ENCODE measurements at regions of chr9 and their contacts with region 1.

Region 1: GRCh38 chr9:14353222-14354056 is 39.5 kb upstream of the NFIB start:
- DNase-seq: peak; percentile 95

Region 2: DNA sequence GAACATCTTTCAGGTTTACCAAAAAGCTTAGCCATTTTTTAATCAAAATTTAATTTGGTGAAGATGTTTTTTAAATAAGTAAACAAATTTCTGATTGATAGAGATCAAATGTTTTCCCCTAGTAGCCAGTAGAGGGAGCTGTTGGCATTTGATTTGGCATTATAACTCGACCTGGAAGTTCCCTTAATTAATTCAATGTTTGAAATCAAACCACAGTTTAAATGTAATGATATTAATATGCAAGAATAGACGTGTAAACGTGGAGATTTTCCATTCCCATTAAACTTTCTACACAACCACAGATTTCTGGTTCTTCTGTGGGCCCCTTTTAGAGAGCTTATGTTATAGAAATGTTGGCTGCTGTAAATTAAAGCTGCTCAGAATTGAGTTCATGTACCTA is 925.9 kb before region 1 on chr9:
- intact Hi-C with region 1: loop called (anchors 5 kb)
- DNase-seq: no peak

Region 3: DNA sequence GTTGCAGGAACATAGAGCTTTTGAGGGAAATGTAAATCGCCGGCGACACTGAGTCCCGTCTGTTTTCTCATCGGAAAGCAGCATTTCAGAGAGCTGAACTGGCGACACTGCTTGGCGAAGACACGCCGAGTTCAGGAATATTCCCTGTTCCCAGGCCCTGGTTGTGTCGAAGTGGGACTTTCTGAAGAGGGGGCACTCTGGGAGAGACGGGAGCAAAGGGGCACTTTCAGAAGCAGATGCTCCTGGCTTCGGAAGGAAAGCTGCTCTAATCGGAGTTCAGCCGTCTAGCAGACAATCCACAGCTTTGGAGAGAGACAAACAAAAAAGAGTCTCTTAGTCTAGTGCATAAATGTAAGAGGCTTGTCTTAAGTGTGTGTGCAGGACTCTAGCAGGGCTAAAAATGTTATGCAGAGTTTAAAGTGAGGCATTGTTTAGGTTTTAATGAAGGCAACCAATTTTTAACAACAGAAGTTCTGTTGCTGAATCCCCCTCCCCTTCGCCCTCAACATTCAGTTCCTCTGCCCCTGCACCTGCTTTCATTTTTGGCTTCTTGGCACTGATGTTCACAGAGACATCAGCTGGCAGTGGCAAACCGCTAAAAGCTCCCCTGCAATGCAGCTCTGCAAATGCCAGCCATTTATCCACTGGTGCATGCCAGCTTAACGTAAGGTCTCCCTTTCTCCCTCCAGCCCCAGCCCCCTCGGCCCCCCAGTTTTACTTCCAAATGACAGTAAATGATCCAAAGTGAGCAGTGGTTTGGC is 784.4 kb before region 1 on chr9:
- intact Hi-C with region 1: loop called (anchors 10 kb)
- DNase-seq: no peak

Region 4: GRCh38 chr9:13787234-13787833 is 566.1 kb before region 1 on chr9:
- intact Hi-C with region 1: loop called (anchors 10 kb)
- DNase-seq: no peak

Region 5: GRCh38 chr9:14030375-14031059 is 322.9 kb before region 1 on chr9:
- intact Hi-C with region 1: loop called (anchors 5 kb)
- DNase-seq: no peak

Region 6: GRCh38 chr9:14395317-14396082 is 42.1 kb after region 1 on chr9:
- intact Hi-C with region 1: loop called (anchors 5 kb)
- DNase-seq: no peak

Region 7: GRCh38 chr9:14508884-14509283 is 155.4 kb after region 1 on chr9:
- intact Hi-C with region 1: no loop called
- DNase-seq: no peak